Astrocyte of the cerebellum (primary cell): ENCODE measurements at regions of chrX and their contacts with region 1.

Region 1: GRCh38 chrX:13283950-13284914 is 35.6 kb downstream of the ATXN3L start:
- DNase-seq: no peak
- H3K4me3 ChIP-seq: no peak overlapping the region
- CTCF ChIP-seq: no peak

Region 2: GRCh38 chrX:13220916-13221315 is 63.3 kb before region 1 on chrX:
- in situ Hi-C with region 1: no loop called
- DNase-seq: peak; percentile 89
- H3K4me3 ChIP-seq: no peak overlapping the region
- CTCF ChIP-seq: no peak

Region 3: GRCh38 chrX:13254076-13254785 is 30.0 kb before region 1 on chrX:
- in situ Hi-C with region 1: loop called (anchors 5 kb)
- DNase-seq: no peak
- H3K4me3 ChIP-seq: no peak overlapping the region
- CTCF ChIP-seq: peak; percentile 2

Region 4: GRCh38 chrX:13334491-13334890 is 50.3 kb after region 1 on chrX:
- in situ Hi-C with region 1: loop called (anchors 10 kb)
- DNase-seq: no peak
- H3K4me3 ChIP-seq: no peak overlapping the region
- CTCF ChIP-seq: no peak